ENCODE measurements at regions of chr1 and their contacts with region 1.

Region 1: DNA sequence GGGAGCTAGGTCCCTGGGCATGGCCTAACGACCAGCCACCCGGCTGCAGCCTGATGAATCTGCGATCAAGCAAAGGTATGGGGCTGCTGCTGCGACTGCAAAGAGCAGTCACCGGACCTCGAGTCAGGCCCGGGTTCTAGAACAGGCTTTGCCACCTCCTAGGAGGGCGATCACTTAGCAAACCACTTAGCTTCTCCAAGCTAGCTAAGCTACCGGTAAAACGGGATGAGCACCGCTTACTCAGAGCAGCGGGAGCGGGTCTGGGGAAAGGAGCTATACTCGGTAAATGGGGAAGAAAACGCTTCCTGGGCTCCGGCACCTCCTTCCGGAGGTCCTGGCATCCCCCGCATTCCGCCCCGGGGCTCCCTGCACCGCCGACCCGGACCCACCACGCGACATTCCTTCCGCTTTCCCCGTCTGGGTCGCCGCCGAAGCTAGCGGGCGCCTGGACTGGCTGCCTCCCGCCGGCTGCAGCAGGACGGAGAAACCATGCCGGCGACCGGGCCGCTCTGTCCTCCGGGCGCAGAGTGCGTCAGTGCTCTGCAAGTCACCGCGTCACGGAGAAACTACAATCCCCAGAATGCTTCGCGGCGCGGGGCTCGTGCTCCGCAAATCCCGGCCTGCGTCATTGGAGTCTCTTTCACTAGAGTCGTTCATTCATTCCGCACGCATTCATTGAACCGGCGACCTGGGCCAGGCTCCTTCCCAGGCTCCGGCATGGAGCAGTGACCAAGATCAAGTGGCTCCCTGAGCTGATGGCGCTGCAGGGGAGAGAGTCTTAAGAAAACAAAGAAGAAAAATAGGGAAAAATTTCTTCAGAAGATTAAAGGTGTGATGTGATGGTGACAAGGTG is at the start of gene LSM10:
- DNase-seq: peak; percentile 87
- ATAC-seq: peak; percentile 66
- H3K4me3 ChIP-seq: peak within 1 kb of the TSS; percentile 87 to 92 (median 91)
- H3K27ac ChIP-seq: peak within 1 kb of the TSS; percentile 80
- H3K4me1 ChIP-seq: peaks cover 41% of the 10 kb centered on the region
- H3K27me3 ChIP-seq: no peaks in the 10 kb centered on the region; a peak in 1 of 5 replicates
- CTCF ChIP-seq: peak; percentile 24
- EP300 ChIP-seq: no peak
- POLR2A ChIP-seq: peak; percentile 80 to 90
- RAD21 ChIP-seq: no peak
- total RNA-seq, gene LSM10: 14.0 and 17.0 TPM in 2 replicates

Region 2: DNA sequence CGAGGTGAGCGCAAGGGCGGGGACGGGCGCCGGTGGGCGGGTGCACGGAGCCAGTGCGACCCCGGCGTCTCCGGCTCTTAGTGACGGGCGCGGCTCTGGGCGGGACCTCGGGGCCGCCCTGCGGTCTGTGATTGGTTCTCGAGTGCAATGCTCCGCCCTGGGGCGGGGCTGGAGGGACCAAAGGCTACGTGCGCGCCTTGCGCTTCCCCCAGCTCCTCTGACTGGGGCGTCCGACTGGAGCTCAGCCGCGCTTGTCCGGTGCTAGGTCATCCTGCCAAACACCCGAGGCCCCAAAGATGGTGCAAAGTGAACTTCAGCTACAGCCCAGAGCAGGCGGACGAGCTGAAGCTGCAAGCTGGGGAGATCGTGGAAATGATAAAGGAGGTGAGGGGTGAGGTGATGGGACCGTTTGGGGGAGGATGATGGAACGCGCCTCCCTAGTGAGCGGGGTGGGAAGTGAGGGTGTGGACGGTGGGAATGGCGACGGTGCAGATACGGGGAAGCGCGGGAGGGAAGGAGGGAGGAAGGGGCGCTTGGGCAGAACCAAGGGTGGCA is 90.6 kb before region 1 on chr1:
- CTCF ChIA-PET with region 1: no interaction called
- POLR2A ChIA-PET with region 1: interaction called, 20 read pairs
- in situ Hi-C with region 1: no loop called
- intact Hi-C with region 1: no loop called
- DNase-seq: peak; percentile 90
- ATAC-seq: peak; percentile 94
- H3K4me3 ChIP-seq: peak overlapping the region; percentile 82 to 88 (median 85)
- H3K27ac ChIP-seq: peak overlapping the region; percentile 88
- H3K4me1 ChIP-seq: peaks cover 29% of the 10 kb centered on the region
- H3K27me3 ChIP-seq: no peaks in the 10 kb centered on the region
- CTCF ChIP-seq: peak; percentile 31; the same call in 1 of the 2 replicates
- EP300 ChIP-seq: no peak
- POLR2A ChIP-seq: peak; percentile 96 to 99
- RAD21 ChIP-seq: no peak

Region 3: GRCh38 chr1:36369061-36369861 is 28.3 kb before region 1 on chr1:
- CTCF ChIA-PET with region 1: no interaction called
- POLR2A ChIA-PET with region 1: interaction called, 12 read pairs
- in situ Hi-C with region 1: no loop called
- intact Hi-C with region 1: no loop called
- DNase-seq: peak; percentile 57
- ATAC-seq: peak; percentile 58
- H3K4me3 ChIP-seq: no peak overlapping the region
- H3K27ac ChIP-seq: no peak overlapping the region
- H3K4me1 ChIP-seq: peaks cover 36% of the 10 kb centered on the region
- H3K27me3 ChIP-seq: no peaks in the 10 kb centered on the region
- CTCF ChIP-seq: peak; percentile 90
- EP300 ChIP-seq: no peak
- POLR2A ChIP-seq: no peak
- RAD21 ChIP-seq: peak; percentile 79

Region 4: DNA sequence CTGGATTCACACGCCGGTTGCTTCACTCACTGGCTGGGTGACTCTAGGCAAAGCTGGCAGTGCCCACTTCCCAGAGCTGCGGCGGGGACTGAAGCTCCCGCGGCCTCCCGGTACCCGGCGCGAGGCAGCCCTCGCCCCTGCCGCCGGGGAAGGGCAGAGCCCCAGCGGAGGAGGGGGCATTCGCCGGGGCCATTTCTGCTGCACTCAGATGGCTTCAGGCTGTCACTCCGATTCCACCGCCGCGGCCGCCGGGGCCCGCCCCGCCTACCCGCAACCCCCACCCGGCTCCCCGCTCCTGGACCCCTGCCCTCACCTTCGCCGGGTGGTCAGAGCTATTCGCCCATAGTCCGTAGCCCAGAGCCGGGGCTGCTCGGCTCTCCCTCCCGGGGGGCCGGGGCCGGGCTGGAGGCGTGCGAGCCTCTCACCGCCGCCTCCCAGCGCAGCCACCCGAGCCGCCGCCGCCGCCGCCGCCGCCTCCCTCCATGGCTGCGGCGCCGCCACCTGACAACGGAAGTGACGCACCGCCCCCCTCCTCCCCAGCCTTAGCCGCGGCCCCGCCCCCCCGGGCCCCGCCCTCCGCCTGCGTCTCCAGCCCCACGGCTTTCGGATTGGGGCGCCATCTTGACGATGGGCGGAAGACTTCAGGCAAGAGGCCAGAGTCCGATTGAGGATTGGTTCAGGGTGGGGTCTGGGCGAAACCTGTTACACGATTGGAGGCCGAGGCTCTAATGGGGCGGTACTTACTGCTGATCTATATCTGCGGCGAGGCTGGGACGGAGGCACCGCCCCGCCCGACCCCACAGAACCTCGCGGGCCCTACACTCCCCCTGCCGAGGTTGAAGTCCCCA is 12.0 kb before region 1 on chr1 and contains the start of gene STK40:
- CTCF ChIA-PET with region 1: no interaction called
- POLR2A ChIA-PET with region 1: interaction called, 391 read pairs
- in situ Hi-C with region 1: no loop called
- intact Hi-C with region 1: loop called (anchors 1 kb)
- DNase-seq: peak; percentile 98
- ATAC-seq: peak; percentile 92
- H3K4me3 ChIP-seq: peak within 1 kb of the TSS; percentile 92 to 98 (median 97)
- H3K27ac ChIP-seq: peak within 1 kb of the TSS; percentile 99
- H3K4me1 ChIP-seq: peaks cover 59% of the 10 kb centered on the region
- H3K27me3 ChIP-seq: no peaks in the 10 kb centered on the region; a peak in 1 of 5 replicates
- CTCF ChIP-seq: no peak; the same call in 1 of the 2 replicates
- EP300 ChIP-seq: no peak
- POLR2A ChIP-seq: peak in 1 of 2 experiments; percentile 46; a peak in 1 of 4 replicates
- RAD21 ChIP-seq: no peak
- total RNA-seq, gene STK40: 33.8 and 40.1 TPM in 2 replicates

Region 5: DNA sequence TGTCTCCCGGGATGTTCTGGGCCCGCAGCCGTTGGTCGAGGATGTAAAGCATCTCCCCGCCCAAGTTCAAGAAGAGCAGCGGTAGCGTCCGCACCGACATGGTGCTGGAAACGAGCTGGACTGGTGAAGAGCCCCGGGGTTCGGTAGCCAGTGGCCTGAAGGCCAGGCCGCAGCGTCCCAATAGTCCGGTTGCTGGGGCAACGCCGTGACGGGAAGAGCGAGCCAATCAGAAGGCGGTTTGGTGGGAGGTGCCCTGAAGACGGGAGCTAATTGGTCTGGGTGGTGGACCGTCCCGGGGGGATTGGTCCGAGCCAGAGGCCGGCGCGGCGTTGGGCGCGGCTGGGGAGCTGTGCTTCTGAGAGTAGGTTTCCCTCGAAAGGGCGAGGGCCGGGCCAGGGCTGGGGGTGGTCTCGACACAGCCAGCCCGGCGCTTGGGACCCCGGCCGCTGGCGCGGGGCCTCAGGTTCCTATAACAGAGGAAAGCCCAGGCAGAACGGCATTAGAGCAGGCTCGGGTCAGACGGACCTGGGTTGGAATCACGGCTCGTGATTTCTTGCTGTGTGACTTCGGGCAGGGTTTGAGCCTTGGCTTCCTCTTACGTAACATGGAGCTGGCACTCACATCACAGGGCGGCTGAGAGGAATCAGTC is 52.8 kb after region 1 on chr1 and contains the start of gene OSCP1:
- CTCF ChIA-PET with region 1: no interaction called
- POLR2A ChIA-PET with region 1: interaction called, 14 read pairs
- in situ Hi-C with region 1: no loop called
- intact Hi-C with region 1: no loop called
- DNase-seq: peak; percentile 79
- ATAC-seq: peak; percentile 95
- H3K4me3 ChIP-seq: peak within 1 kb of the TSS; percentile 42 to 68 (median 65); a peak in 5 of 6 replicates
- H3K27ac ChIP-seq: peak within 1 kb of the TSS; percentile 67
- H3K4me1 ChIP-seq: 0 out of 2 replicates have a peak, but pooled peaks cover 7% of the 10 kb centered on the region
- H3K27me3 ChIP-seq: no peaks in the 10 kb centered on the region
- CTCF ChIP-seq: no peak
- EP300 ChIP-seq: no peak
- POLR2A ChIP-seq: peak in 1 of 2 experiments; percentile 65; a peak in 2 of 4 replicates
- RAD21 ChIP-seq: no peak
- total RNA-seq, gene OSCP1: 0.60 and 0.86 TPM in 2 replicates

Region 6: GRCh38 chr1:36486436-36487335 is 89.1 kb after region 1 on chr1:
- CTCF ChIA-PET with region 1: no interaction called
- POLR2A ChIA-PET with region 1: interaction called, 11 read pairs
- in situ Hi-C with region 1: no loop called
- intact Hi-C with region 1: no loop called
- DNase-seq: peak; percentile 98
- ATAC-seq: peak; percentile 92
- H3K4me3 ChIP-seq: peak overlapping the region; percentile 24 to 61 (median 33); a peak in 5 of 6 replicates
- H3K27ac ChIP-seq: peak overlapping the region; percentile 88
- H3K4me1 ChIP-seq: peaks cover 77% of the 10 kb centered on the region
- H3K27me3 ChIP-seq: no peaks in the 10 kb centered on the region; a peak in 1 of 5 replicates
- CTCF ChIP-seq: no peak
- EP300 ChIP-seq: peak; percentile 97 to 98
- POLR2A ChIP-seq: peak; percentile 50 to 78; a peak in 3 of 4 replicates
- RAD21 ChIP-seq: no peak